Right cardiac atrium (tissue), 5 donors: ENCODE measurements at regions of chr6 and their contacts with region 1.

Region 1: DNA sequence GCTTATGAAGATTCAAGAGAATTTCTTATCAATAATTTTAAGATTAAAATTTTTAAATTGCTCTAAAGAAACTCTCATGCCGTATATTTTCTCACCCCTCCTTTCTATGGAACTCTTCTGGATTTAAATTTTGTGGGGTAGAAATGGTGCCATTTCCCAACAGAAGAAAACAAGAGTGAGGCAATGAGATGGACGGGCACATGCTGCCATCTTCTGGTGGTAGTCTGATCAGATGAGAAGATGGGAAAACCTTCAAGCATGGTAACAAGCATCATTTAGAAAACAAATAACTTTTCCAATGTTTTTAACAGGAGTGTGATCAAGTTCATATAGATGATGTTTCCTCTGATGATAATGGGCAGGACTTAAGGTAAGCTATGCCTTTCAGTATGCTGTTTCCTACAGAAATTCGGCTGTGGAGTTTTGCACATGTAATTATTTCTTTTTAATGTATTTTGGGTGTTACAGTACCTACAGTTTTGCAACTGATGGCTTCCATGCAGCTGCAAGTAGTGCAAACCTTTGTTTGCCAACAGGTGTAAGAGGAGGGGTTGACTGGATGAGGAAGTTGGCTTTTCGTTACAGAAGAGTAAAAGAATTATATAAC is 271.4 kb downstream of the EYA4 start:
- DNase-seq: peak; percentile 33 to 61 (median 60)
- ATAC-seq: no peak
- H3K4me3 ChIP-seq: no peak overlapping the region
- H3K27ac ChIP-seq: no peak overlapping the region
- H3K4me1 ChIP-seq: no peaks in the 10 kb centered on the region
- H3K27me3 ChIP-seq: no peaks in the 10 kb centered on the region

Region 2: GRCh38 chr6:132820629-132821381 is 691.7 kb before region 1 on chr6:
- intact Hi-C with region 1: loop called in 1 of 4 experiments (anchors 10 kb)
- DNase-seq: no peak
- ATAC-seq: peak; percentile 21 to 44
- H3K4me3 ChIP-seq: no peak overlapping the region
- H3K27ac ChIP-seq: peak overlapping the region; percentile 13
- H3K4me1 ChIP-seq: no peaks in the 10 kb centered on the region
- H3K27me3 ChIP-seq: no peaks in the 10 kb centered on the region

Region 3: GRCh38 chr6:132962936-132963868 is 549.3 kb before region 1 on chr6:
- intact Hi-C with region 1: loop called in 1 of 4 experiments (anchors 5 kb)
- DNase-seq: peak; percentile 63 to 86 (median 79)
- ATAC-seq: peak; percentile 72 to 87
- H3K4me3 ChIP-seq: no peak overlapping the region
- H3K27ac ChIP-seq: no peak overlapping the region
- H3K4me1 ChIP-seq: no peaks in the 10 kb centered on the region
- H3K27me3 ChIP-seq: no peaks in the 10 kb centered on the region